CD8-positive, alpha-beta T cell (primary cell): ENCODE measurements at regions of chr7 and their contacts with region 1.

Region 1: DNA sequence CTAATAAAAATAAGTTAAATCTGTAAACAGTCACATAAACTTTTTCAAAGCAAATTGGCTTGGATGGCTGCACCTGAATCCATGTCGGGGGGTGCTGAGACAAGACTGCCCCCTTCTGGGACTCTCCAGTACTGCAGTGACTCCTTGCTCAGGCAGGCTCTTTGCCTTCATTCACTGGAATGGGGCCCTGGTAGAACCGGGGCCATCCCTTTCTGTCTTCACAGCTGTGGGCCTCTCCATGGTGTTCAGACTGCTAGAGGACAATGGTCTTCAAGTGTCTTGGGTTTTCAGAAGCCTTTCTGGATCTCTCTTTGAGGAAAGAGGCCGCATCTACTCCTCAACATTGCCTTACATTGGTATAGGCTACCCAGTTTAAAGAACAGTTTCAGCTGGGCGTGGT is 16.1 kb upstream of the IMPDH1 start:
- DNase-seq: peak; percentile 56 to 85 (median 81)
- ATAC-seq: peak; percentile 80
- H3K4me3 ChIP-seq: no peak overlapping the region
- H3K4me3 Mint-ChIP-seq: no peak overlapping the region
- H3K27ac ChIP-seq: no peak overlapping the region
- H3K27ac Mint-ChIP-seq: no peak overlapping the region
- H3K4me1 ChIP-seq: no peaks in the 10 kb centered on the region
- H3K4me1 Mint-ChIP-seq: peaks cover 8% of the 10 kb centered on the region
- H3K27me3 ChIP-seq: no peaks in the 10 kb centered on the region
- H3K27me3 Mint-ChIP-seq: peaks cover 10% of the 10 kb centered on the region
- CTCF ChIP-seq: peak; percentile 96

Region 2: GRCh38 chr7:128352153-128352537 is 73.7 kb before region 1 on chr7:
- CTCF ChIA-PET with region 1: interaction called, 23 read pairs
- POLR2A ChIA-PET with region 1: interaction called, 3 read pairs
- intact Hi-C with region 1: loop called in 1 of 2 experiments (anchors 1 kb)
- DNase-seq: peak in 4 of 9 experiments; percentile 34 to 51 (median 42)
- ATAC-seq: peak; percentile 43
- H3K4me3 ChIP-seq: no peak overlapping the region
- H3K4me3 Mint-ChIP-seq: no peak overlapping the region
- H3K27ac ChIP-seq: no peak overlapping the region
- H3K27ac Mint-ChIP-seq: no peak overlapping the region
- H3K4me1 ChIP-seq: peaks cover 3% of the 10 kb centered on the region
- H3K4me1 Mint-ChIP-seq: peaks cover 8% of the 10 kb centered on the region
- H3K27me3 ChIP-seq: peaks cover 0 to 10% of the 10 kb centered on the region in 2 experiments
- H3K27me3 Mint-ChIP-seq: peaks cover 29% of the 10 kb centered on the region
- CTCF ChIP-seq: peak; percentile 39

Region 3: DNA sequence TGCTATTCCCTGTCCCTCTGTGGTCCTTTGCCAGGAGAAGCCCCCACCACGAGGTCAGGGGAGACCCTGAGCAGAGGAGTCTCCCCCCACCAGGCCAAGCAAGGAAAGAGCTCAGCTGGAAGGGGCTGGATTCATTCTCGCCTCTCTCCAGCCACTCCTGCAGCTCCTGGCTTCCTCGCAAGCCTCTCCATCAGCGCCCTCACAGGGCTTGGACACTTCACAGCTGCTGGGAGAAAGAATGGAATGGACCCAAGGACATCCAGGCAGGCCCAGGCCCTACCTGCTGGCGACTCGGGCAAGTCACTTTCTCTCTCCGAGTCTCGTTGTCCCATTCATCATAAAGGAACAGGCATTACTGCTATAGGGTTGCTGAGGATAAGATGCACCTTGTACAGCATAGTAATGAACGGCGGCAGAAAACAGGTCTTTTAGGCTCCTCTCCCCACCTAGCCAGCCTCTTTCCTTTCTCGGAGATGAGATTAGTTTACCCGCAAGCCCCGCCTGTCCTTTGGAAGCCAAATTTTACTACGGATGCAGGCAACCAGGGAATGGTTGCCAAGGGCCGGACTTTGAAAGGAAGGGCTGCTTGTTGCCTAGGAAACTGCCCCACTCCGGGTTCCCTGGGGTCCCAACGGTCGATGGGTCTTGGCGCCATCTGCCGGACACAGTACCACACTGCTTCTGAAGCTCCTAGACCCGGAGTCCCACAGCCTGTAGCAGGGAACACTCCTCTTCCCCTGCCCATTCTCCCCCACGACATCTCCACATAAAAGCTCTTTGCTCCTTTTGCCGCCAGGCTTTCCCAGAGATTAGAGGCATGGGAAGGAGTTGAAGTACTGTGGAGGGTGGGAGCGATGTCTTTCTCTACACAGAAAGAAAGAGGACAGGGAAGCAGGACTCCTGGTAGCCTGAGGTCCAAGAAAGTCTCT is 38.4 kb before region 1 on chr7:
- CTCF ChIA-PET with region 1: interaction called, 34 read pairs
- POLR2A ChIA-PET with region 1: no interaction called
- intact Hi-C with region 1: no loop called
- DNase-seq: peak; percentile 49 to 77 (median 71)
- ATAC-seq: peak; percentile 98
- H3K4me3 ChIP-seq: no peak overlapping the region
- H3K4me3 Mint-ChIP-seq: no peak overlapping the region
- H3K27ac ChIP-seq: no peak overlapping the region
- H3K27ac Mint-ChIP-seq: no peak overlapping the region
- H3K4me1 ChIP-seq: no peaks in the 10 kb centered on the region
- H3K4me1 Mint-ChIP-seq: no peaks in the 10 kb centered on the region
- H3K27me3 ChIP-seq: no peaks in the 10 kb centered on the region
- H3K27me3 Mint-ChIP-seq: no peaks in the 10 kb centered on the region
- CTCF ChIP-seq: peak; percentile 73

Region 4: GRCh38 chr7:128409596-128410160 is 16.2 kb before region 1 on chr7 and contains the start of gene IMPDH1:
- CTCF ChIA-PET with region 1: interaction called, 389 read pairs
- POLR2A ChIA-PET with region 1: interaction called, 5 read pairs
- intact Hi-C with region 1: loop called in 1 of 2 experiments (anchors 1 kb)
- DNase-seq: peak; percentile 65 to 92 (median 86)
- ATAC-seq: peak; percentile 75
- H3K4me3 ChIP-seq: peak within 1 kb of the TSS; percentile 93 to 99
- H3K4me3 Mint-ChIP-seq: peak within 1 kb of the TSS; percentile 91
- H3K27ac ChIP-seq: peak within 1 kb of the TSS; percentile 74 to 84
- H3K27ac Mint-ChIP-seq: peak within 1 kb of the TSS; percentile 84
- H3K4me1 ChIP-seq: peaks cover 37% of the 10 kb centered on the region
- H3K4me1 Mint-ChIP-seq: peaks cover 40% of the 10 kb centered on the region
- H3K27me3 ChIP-seq: no peaks in the 10 kb centered on the region
- H3K27me3 Mint-ChIP-seq: no peaks in the 10 kb centered on the region
- CTCF ChIP-seq: no peak
- total RNA-seq, gene IMPDH1: 19.6 to 20.6 TPM

Region 5: DNA sequence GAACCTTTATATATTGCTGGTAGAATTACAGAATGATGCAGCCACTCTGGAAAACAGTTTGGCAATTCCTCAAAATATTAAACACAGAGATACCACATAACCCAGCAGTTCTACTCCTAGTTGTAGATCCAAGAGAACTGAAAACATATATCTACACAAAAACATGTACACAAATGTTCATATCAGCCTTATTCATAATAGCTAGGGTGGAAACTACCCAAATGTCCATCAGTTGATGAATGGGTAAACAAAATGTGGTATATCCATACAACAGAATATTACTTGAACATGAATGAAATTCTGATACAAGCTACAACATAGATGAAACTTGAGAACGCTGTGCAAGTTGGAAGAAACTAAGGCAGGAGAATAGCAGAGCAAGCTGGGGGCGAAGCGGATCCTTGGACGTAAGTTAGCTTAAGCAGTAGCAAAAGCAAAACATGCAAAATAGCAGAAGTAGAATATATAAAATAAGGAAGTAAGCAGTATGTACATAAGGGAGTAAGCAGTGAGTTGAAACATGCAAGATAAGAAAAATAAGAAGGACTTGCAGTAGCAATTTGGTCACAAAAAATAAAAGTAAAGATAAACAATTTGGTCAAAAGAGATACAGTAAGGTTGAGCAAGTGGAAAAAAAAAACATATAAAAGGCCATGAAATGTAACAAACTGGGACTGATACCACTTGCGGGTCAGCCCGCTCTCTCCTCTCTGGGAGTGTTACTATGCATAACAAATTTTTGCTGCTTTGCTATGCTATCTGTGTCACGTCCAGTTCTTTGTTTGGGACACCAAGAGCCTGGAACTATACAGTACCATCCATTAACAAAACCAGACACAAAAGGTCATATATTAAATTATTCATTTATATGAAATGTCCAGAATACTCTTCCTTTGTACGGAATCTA is 11.8 kb after region 1 on chr7:
- CTCF ChIA-PET with region 1: interaction called, 47 read pairs
- POLR2A ChIA-PET with region 1: no interaction called
- intact Hi-C with region 1: no loop called
- DNase-seq: no peak
- ATAC-seq: no peak
- H3K4me3 ChIP-seq: no peak overlapping the region
- H3K4me3 Mint-ChIP-seq: no peak overlapping the region
- H3K27ac ChIP-seq: no peak overlapping the region
- H3K27ac Mint-ChIP-seq: no peak overlapping the region
- H3K4me1 ChIP-seq: no peaks in the 10 kb centered on the region
- H3K4me1 Mint-ChIP-seq: no peaks in the 10 kb centered on the region
- H3K27me3 ChIP-seq: no peaks in the 10 kb centered on the region
- H3K27me3 Mint-ChIP-seq: peaks cover 3% of the 10 kb centered on the region
- CTCF ChIP-seq: no peak

Region 6: GRCh38 chr7:128450409-128450808 is 24.6 kb after region 1 on chr7:
- CTCF ChIA-PET with region 1: interaction called, 80 read pairs
- POLR2A ChIA-PET with region 1: interaction called, 6 read pairs
- intact Hi-C with region 1: loop called in 1 of 2 experiments (anchors 2 kb)
- DNase-seq: no peak
- ATAC-seq: no peak
- H3K4me3 ChIP-seq: no peak overlapping the region
- H3K4me3 Mint-ChIP-seq: no peak overlapping the region
- H3K27ac ChIP-seq: no peak overlapping the region
- H3K27ac Mint-ChIP-seq: no peak overlapping the region
- H3K4me1 ChIP-seq: peaks cover 6% of the 10 kb centered on the region
- H3K4me1 Mint-ChIP-seq: peaks cover 5% of the 10 kb centered on the region
- H3K27me3 ChIP-seq: no peaks in the 10 kb centered on the region
- H3K27me3 Mint-ChIP-seq: no peaks in the 10 kb centered on the region
- CTCF ChIP-seq: no peak

Region 7: DNA sequence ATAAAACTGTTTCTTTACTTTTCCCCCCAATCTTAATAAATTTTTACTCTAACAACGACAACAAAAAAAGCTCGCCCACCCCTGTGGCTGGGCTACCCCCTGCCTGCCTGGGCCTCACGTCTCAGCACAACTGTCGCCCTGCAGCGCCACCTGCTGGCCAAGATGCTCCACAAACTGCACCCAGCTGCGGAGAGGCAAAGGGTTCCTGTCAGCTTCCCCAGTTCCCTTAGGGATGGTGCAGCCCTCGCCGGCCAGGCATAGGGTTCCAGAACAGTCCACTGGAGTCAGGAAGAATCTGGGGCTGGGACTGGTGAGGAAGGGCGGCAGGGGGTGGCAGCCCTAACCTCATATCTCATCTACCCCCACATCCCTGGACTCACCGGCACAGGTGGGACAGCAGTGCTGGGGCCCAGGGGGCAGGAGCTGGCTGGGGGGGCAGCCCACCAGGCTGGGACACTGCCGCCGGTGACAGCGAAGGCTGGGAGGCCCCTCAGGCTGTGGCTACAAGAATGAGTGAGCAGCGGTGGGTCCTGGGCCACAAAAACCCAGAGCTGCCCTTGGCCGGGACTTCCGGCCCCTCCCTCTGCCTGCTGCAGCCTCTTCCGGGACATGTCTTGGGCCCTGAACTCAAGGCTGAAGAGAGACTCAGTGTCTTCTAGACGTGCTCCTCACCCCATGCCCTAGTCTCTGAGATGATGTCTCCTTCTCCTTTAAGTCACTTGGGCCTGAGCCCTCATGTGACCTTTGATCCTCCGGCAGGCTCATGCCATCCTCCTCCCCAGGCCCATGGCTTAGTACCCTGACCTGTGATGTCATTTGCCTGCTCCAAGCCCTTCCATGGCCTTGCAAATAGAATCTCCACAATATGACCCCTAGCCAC is 458.0 kb after region 1 on chr7:
- CTCF ChIA-PET with region 1: interaction called, 11 read pairs
- POLR2A ChIA-PET with region 1: no interaction called
- intact Hi-C with region 1: loop called in 1 of 2 experiments (anchors 2 kb)
- DNase-seq: peak; percentile 71 to 94 (median 87)
- ATAC-seq: peak; percentile 92
- H3K4me3 ChIP-seq: peak overlapping the region in 1 of 2 experiments; percentile 48
- H3K4me3 Mint-ChIP-seq: peak overlapping the region; percentile 58
- H3K27ac ChIP-seq: no peak overlapping the region
- H3K27ac Mint-ChIP-seq: no peak overlapping the region
- H3K4me1 ChIP-seq: no peaks in the 10 kb centered on the region
- H3K4me1 Mint-ChIP-seq: no peaks in the 10 kb centered on the region
- H3K27me3 ChIP-seq: peaks cover 0 to 16% of the 10 kb centered on the region in 2 experiments
- H3K27me3 Mint-ChIP-seq: peaks cover 14% of the 10 kb centered on the region
- CTCF ChIP-seq: peak; percentile 98